IMR-90 (cell line): ENCODE measurements at regions of chr1 and their contacts with region 1.

Region 1: DNA sequence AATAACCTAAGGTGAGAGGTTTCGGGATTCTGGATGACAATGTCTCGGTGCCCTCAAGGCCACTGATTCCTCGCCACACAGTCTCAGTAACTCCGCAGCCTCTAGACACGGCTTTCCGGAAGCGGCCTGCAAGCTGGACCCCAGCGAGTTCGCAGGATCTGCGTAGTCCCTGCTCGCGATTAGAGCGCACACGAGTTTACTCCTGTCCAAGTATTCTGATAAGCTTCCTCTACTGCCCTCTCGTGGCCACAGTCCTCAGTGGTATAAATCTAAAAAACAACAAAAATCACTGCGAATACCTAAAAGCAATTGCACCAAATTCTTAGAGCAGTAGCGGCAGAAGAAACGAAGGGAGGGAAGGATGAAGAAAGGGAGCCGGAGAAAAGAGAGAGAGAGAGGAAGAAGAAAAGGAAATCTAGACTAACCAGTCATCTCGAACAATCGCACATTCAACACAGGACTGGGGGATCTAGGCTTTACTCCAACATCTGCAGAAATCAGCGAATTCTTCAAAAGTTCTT is 1.1 kb upstream of the PLXNA2 start:
- DNase-seq: peak; percentile 92
- ATAC-seq: peak; percentile 77
- H3K4me3 ChIP-seq: peak overlapping the region; percentile 7; the same call in 1 of the 2 replicates
- H3K27ac ChIP-seq: no peak overlapping the region
- H3K4me1 ChIP-seq: peaks cover 5% of the 10 kb centered on the region; the same call in 1 of the 2 replicates
- H3K27me3 ChIP-seq: peaks cover 19% of the 10 kb centered on the region
- CTCF ChIP-seq: peak; percentile 87
- POLR2A ChIP-seq: no peak
- RAD21 ChIP-seq: peak; percentile 82

Region 2: DNA sequence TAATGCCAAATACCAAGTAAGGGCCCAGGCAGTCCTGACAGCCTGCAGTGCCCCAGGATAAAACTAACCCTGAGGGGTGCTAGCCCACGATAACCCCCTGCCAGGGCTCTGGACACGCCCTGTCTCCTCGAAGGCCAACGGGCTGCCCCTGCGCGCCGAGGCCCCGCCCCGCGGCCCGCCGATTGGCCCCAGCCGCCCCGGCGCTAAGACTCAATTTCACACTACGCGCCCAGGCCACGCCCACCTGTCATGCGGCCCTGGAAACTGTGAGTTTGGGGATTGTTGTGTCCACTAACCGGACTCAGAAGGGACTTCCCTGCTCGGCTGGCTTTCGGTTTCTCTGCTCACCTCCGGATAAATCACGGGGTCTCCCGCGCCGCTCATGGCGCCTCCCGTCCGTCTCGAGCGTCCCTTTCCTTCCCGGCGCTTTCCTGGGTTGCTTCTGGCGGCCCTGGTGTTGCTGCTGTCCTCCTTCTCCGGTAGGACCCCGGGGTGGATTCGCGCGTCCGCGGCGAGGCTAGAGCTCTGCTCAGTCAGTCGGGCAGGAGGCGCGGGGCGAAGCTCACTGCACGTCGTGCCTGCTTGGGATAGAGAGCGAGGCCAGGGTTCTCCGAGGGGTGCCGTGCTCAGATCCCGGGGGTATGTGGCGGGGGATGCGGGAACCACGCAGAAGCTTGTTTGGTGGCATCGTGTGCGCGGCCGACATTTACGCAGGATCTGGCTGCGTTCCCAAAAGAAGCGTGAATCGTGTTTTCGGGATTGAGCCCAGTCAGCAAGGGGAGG is 600.2 kb before region 1 on chr1 and contains the start of gene CR1L:
- CTCF ChIA-PET with region 1: no interaction called
- POLR2A ChIA-PET with region 1: no interaction called
- dilution Hi-C with region 1: no loop called
- in situ Hi-C with region 1: no loop called
- intact Hi-C with region 1: no loop called
- DNase-seq: peak; percentile 27
- ATAC-seq: peak; percentile 100
- H3K4me3 ChIP-seq: peak within 1 kb of the TSS; percentile 45
- H3K27ac ChIP-seq: no peak within 1 kb of the TSS
- H3K4me1 ChIP-seq: no peaks in the 10 kb centered on the region
- H3K27me3 ChIP-seq: peaks cover 19% of the 10 kb centered on the region
- CTCF ChIP-seq: no peak
- POLR2A ChIP-seq: no peak
- RAD21 ChIP-seq: no peak
- total RNA-seq, gene CR1L: not detected in 2 replicates

Region 3: DNA sequence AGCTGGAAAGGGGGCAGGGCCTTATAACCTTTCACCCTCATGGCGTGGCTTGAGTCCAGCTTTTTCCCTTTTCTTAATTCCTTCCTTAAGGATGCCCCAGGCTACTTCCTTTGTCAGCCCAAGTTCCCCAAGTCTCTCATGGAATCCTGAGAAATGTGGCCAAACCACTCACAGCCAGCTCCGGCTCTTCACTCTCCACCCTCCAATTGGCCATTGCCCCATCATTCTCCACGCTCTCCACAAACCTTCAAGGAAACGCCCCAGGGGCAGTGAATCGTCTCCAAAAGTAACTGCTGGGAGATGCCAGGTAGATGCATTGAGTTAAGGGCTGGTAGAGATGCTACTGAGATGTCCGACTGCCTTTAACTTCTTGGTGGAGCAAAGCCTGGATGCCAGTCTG is 220.8 kb before region 1 on chr1:
- CTCF ChIA-PET with region 1: interaction called, 158 read pairs
- POLR2A ChIA-PET with region 1: interaction called, 4 read pairs
- dilution Hi-C with region 1: no loop called
- in situ Hi-C with region 1: loop called (anchors 5 kb)
- intact Hi-C with region 1: loop called (anchors 1 kb)
- DNase-seq: no peak
- ATAC-seq: no peak
- H3K4me3 ChIP-seq: no peak overlapping the region
- H3K27ac ChIP-seq: no peak overlapping the region
- H3K4me1 ChIP-seq: no peaks in the 10 kb centered on the region; the same call in 1 of the 2 replicates
- H3K27me3 ChIP-seq: no peaks in the 10 kb centered on the region
- CTCF ChIP-seq: no peak
- POLR2A ChIP-seq: no peak
- RAD21 ChIP-seq: no peak

Region 4: DNA sequence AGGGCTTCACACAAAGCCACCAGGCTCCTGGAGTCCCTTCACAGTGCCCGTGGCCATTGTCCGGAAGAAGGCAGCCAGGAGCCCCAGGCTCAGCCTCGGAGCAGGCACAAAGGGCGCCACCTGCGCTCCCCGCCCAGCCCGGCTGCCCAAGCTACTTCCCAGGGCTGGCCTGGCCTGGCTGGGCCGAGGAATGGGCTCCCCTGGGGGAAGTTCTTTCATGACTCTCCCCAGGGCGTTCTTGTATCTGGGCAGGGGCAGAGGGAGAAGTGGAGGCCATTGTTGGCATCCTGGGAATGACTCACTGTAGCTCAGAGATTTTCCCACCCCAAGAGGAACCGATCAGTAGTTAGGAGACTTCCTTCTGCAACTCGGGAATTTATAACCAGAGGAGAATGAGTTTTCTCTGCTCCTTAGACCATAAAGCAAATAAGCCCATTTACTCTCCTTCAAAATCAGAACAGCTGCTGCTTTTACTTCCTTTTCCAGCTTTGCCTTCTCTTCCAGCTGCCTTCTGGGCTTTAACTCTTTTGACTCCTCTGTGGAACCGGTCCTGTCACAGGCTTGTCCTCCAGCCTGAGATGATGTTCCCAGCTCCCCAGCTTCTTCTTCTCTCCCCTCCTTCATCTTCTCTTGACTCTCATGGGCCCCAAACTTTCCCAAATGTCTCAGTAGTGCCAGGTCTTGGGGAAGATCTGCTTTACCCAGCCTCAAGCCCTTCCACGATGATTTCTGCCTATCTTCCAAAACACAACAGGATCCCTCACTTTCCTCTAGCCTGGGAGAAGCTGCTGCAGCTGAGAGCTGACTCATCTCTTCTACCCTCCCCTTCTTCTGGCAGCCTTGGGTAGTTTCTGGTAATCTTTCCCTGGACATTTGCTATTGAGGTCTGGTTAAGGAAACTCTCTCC is 215.6 kb before region 1 on chr1:
- CTCF ChIA-PET with region 1: interaction called, 158 read pairs
- POLR2A ChIA-PET with region 1: no interaction called
- dilution Hi-C with region 1: no loop called
- in situ Hi-C with region 1: loop called (anchors 5 kb)
- intact Hi-C with region 1: no loop called
- DNase-seq: peak; percentile 74
- ATAC-seq: peak; percentile 85
- H3K4me3 ChIP-seq: no peak overlapping the region
- H3K27ac ChIP-seq: peak overlapping the region; percentile 13; the same call in 1 of the 2 replicates
- H3K4me1 ChIP-seq: peaks cover 5% of the 10 kb centered on the region; the same call in 1 of the 2 replicates
- H3K27me3 ChIP-seq: no peaks in the 10 kb centered on the region
- CTCF ChIP-seq: no peak
- POLR2A ChIP-seq: no peak
- RAD21 ChIP-seq: no peak

Region 5: GRCh38 chr1:208132287-208132883 is 112.9 kb before region 1 on chr1:
- CTCF ChIA-PET with region 1: interaction called, 4 read pairs
- POLR2A ChIA-PET with region 1: no interaction called
- dilution Hi-C with region 1: no loop called
- in situ Hi-C with region 1: loop called (anchors 5 kb)
- intact Hi-C with region 1: no loop called
- DNase-seq: peak; percentile 42
- ATAC-seq: peak; percentile 68
- H3K4me3 ChIP-seq: no peak overlapping the region
- H3K27ac ChIP-seq: no peak overlapping the region
- H3K4me1 ChIP-seq: 0 out of 2 replicates have a peak, but pooled peaks cover 2% of the 10 kb centered on the region
- H3K27me3 ChIP-seq: no peaks in the 10 kb centered on the region
- CTCF ChIP-seq: peak; percentile 61
- POLR2A ChIP-seq: no peak
- RAD21 ChIP-seq: peak; percentile 59

Region 6: GRCh38 chr1:208347191-208347590 is 101.9 kb after region 1 on chr1:
- CTCF ChIA-PET with region 1: no interaction called
- POLR2A ChIA-PET with region 1: no interaction called
- dilution Hi-C with region 1: no loop called
- in situ Hi-C with region 1: no loop called
- intact Hi-C with region 1: no loop called
- DNase-seq: no peak
- ATAC-seq: no peak
- H3K4me3 ChIP-seq: no peak overlapping the region
- H3K27ac ChIP-seq: no peak overlapping the region
- H3K4me1 ChIP-seq: no peaks in the 10 kb centered on the region
- H3K27me3 ChIP-seq: no peaks in the 10 kb centered on the region
- CTCF ChIP-seq: no peak
- POLR2A ChIP-seq: no peak
- RAD21 ChIP-seq: no peak

Region 7: GRCh38 chr1:208357644-208358507 is 112.6 kb after region 1 on chr1:
- CTCF ChIA-PET with region 1: no interaction called
- POLR2A ChIA-PET with region 1: no interaction called
- dilution Hi-C with region 1: no loop called
- in situ Hi-C with region 1: no loop called
- intact Hi-C with region 1: no loop called
- DNase-seq: no peak
- ATAC-seq: no peak
- H3K4me3 ChIP-seq: no peak overlapping the region
- H3K27ac ChIP-seq: no peak overlapping the region
- H3K4me1 ChIP-seq: no peaks in the 10 kb centered on the region
- H3K27me3 ChIP-seq: no peaks in the 10 kb centered on the region
- CTCF ChIP-seq: no peak
- POLR2A ChIP-seq: no peak
- RAD21 ChIP-seq: no peak

Region 8: DNA sequence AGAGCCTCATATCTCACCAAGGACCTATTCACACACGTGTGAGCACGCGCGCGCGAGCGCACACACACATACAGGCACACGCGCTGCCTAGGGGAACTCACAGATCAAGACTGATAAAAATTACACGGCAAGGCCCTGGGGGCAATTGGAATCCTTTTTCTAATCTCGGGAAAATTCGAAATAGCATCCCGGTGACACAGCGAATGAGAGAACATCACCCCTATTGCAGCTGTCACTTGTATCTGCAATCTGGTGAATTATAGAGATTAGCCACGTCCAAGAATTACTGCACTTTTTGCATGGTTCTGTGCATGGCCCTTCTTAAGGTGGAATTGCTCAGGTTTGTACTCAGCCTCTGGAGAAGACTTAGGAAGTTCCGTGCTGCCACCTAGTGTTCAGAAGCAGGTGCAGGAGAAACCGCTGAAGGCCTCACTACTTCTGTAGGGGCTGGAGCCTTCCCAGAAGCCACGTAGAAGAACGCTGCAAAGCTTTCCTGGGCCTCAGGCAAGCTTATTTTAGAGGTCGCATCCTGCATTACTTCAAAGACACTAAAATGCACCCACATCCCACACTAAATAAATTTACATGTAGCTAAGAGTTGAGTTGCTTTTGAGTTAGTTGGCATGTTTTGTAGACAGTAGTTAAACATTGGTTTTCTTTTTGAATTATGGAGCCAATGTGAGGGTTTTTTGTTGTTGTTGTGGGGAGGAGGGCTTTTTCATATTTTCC is 1109.0 kb after region 1 on chr1:
- CTCF ChIA-PET with region 1: no interaction called
- POLR2A ChIA-PET with region 1: no interaction called
- dilution Hi-C with region 1: no loop called
- in situ Hi-C with region 1: no loop called
- intact Hi-C with region 1: loop called (anchors 10 kb)
- DNase-seq: peak; percentile 92
- ATAC-seq: peak; percentile 97
- H3K4me3 ChIP-seq: no peak overlapping the region
- H3K27ac ChIP-seq: no peak overlapping the region
- H3K4me1 ChIP-seq: no peaks in the 10 kb centered on the region
- H3K27me3 ChIP-seq: no peaks in the 10 kb centered on the region
- CTCF ChIP-seq: peak; percentile 84
- POLR2A ChIP-seq: no peak
- RAD21 ChIP-seq: peak; percentile 81